CD4-positive, alpha-beta T cell (primary cell): ENCODE measurements at regions of chrX and their contacts with region 1.

Region 1: GRCh38 chrX:41558531-41558930 is 111.4 kb downstream of the NYX start:
- DNase-seq: peak in 4 of 14 experiments; percentile 7 to 45 (median 38)
- ATAC-seq: no peak
- H3K4me3 ChIP-seq: no peak overlapping the region
- H3K4me3 Mint-ChIP-seq: no peak overlapping the region
- H3K27ac ChIP-seq: no peak overlapping the region
- H3K27ac Mint-ChIP-seq: peak overlapping the region; percentile 83
- H3K4me1 ChIP-seq: peaks cover 22% of the 10 kb centered on the region
- H3K4me1 Mint-ChIP-seq: peaks cover 41% of the 10 kb centered on the region
- H3K27me3 ChIP-seq: no peaks in the 10 kb centered on the region
- H3K27me3 Mint-ChIP-seq: no peaks in the 10 kb centered on the region
- CTCF ChIP-seq: peak; percentile 36

Region 2: DNA sequence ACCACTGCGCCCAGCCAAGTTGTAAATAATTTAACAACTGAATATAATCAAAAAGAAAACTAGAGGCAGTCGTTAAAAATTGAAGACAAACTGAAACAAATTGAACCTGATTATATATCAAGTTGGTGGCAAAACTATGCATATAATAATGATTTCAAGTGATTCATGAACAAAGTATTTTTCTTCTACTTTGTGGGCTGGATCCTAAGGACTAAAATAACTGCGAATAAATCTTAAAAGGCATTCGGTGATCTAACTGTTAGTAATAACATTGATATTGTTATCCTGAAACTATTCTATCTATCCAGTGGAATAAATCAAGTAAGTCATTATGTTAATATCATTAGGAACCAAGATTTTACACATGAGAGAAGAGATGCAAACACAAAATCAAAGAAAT is 494.5 kb before region 1 on chrX:
- CTCF ChIA-PET with region 1: no interaction called
- POLR2A ChIA-PET with region 1: no interaction called
- intact Hi-C with region 1: loop called in 1 of 2 experiments (anchors 5 kb)
- DNase-seq: no peak
- ATAC-seq: no peak
- H3K4me3 ChIP-seq: no peak overlapping the region
- H3K4me3 Mint-ChIP-seq: no peak overlapping the region
- H3K27ac ChIP-seq: no peak overlapping the region
- H3K27ac Mint-ChIP-seq: no peak overlapping the region
- H3K4me1 ChIP-seq: no peaks in the 10 kb centered on the region
- H3K4me1 Mint-ChIP-seq: no peaks in the 10 kb centered on the region
- H3K27me3 ChIP-seq: no peaks in the 10 kb centered on the region
- H3K27me3 Mint-ChIP-seq: no peaks in the 10 kb centered on the region
- CTCF ChIP-seq: no peak

Region 3: DNA sequence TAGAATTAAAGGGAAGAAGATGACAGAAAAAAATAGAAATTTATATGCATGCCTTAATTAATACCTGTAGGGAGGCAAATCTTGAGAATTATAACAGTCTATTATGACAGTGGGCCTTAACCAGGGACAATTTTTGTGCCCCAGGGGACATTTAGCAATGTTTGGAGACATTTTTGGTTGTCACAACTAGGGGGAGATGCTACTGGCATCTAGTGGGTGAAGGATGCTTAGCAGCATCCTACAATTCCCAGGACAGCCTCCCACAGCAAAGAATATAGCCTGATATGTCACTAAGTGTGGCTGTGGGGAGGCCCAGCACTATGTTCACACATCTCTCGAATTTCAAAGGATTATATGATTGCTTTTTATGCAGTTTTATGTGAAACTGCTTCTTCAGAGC is 176.0 kb after region 1 on chrX:
- CTCF ChIA-PET with region 1: no interaction called
- POLR2A ChIA-PET with region 1: no interaction called
- intact Hi-C with region 1: loop called in 1 of 2 experiments (anchors 10 kb)
- DNase-seq: peak in 4 of 14 experiments; percentile 9 to 32 (median 16)
- ATAC-seq: no peak
- H3K4me3 ChIP-seq: no peak overlapping the region
- H3K4me3 Mint-ChIP-seq: no peak overlapping the region
- H3K27ac ChIP-seq: no peak overlapping the region
- H3K27ac Mint-ChIP-seq: no peak overlapping the region
- H3K4me1 ChIP-seq: no peaks in the 10 kb centered on the region
- H3K4me1 Mint-ChIP-seq: peaks cover 9% of the 10 kb centered on the region
- H3K27me3 ChIP-seq: no peaks in the 10 kb centered on the region
- H3K27me3 Mint-ChIP-seq: no peaks in the 10 kb centered on the region
- CTCF ChIP-seq: no peak